ENCODE measurements at regions of chr1 and their contacts with region 1.

Region 1: GRCh38 chr1:3796215-3797061 is at the start of gene LRRC47:
- DNase-seq: peak; percentile 97
- ATAC-seq: peak; percentile 99
- H3K4me3 Mint-ChIP-seq: peak within 1 kb of the TSS; percentile 81
- H3K27ac Mint-ChIP-seq: peak within 1 kb of the TSS; percentile 87
- H3K4me1 Mint-ChIP-seq: peaks cover 44% of the 10 kb centered on the region
- H3K27me3 Mint-ChIP-seq: peaks cover 6% of the 10 kb centered on the region
- total RNA-seq, gene LRRC47: 34.8 to 38.7 TPM

Region 2: GRCh38 chr1:3695326-3696217 is 100.9 kb before region 1 on chr1:
- CTCF ChIA-PET with region 1: no interaction called
- POLR2A ChIA-PET with region 1: no interaction called
- intact Hi-C with region 1: no loop called
- DNase-seq: peak; percentile 65
- ATAC-seq: peak; percentile 76
- H3K4me3 Mint-ChIP-seq: no peak overlapping the region
- H3K27ac Mint-ChIP-seq: no peak overlapping the region
- H3K4me1 Mint-ChIP-seq: peaks cover 3% of the 10 kb centered on the region
- H3K27me3 Mint-ChIP-seq: peaks cover 2% of the 10 kb centered on the region

Region 3: GRCh38 chr1:3707298-3707938 is 89.0 kb before region 1 on chr1:
- CTCF ChIA-PET with region 1: no interaction called
- POLR2A ChIA-PET with region 1: no interaction called
- intact Hi-C with region 1: no loop called
- DNase-seq: no peak
- ATAC-seq: no peak
- H3K4me3 Mint-ChIP-seq: no peak overlapping the region
- H3K27ac Mint-ChIP-seq: no peak overlapping the region
- H3K4me1 Mint-ChIP-seq: peaks cover 5% of the 10 kb centered on the region
- H3K27me3 Mint-ChIP-seq: peaks cover 12% of the 10 kb centered on the region

Region 4: DNA sequence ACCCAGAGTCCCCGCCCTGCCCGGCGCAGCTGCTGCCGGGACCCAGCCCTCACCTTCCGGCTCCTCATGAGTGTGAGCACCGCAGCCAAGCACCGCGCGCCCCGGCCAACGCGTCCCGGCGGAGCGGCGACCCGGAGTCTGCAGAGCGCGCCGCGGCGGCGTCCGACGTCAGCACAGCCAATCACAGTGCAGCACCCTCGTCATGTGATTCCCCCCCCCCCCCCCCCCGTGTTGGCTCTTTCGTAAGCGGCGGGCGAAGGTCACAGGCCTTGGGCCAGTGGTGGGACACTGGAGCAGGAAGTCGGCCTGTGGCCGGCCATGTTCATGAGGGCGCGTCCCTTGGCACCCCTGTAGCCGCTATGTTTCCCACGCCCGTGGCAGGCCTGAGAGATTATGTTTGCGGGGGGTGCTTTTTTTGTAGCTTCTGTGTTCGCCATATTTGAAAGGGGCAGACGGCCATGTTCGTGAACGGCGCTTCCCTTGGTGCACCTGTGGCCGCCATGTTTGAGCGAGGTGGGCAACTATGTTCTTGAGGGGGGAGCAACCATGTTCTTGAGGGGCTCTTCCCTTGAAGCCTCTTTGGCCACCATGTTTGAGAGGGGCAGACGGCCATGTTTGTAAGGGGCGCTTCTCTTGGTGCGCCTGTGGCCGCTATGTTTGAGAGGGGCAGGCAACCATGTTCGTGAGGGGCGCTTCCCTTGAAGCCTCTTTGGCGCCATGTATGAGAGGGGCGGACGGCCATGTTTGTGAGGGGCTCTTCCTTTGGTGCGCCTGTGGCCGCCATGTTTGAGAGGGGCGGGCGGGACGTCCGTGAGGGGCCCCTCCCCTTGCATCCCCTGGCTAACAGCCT is 103.9 kb after region 1 on chr1 and contains the start of gene C1orf174:
- CTCF ChIA-PET with region 1: no interaction called
- POLR2A ChIA-PET with region 1: no interaction called
- intact Hi-C with region 1: loop called (anchors 1 kb)
- DNase-seq: peak; percentile 94
- ATAC-seq: peak; percentile 76
- H3K4me3 Mint-ChIP-seq: peak within 1 kb of the TSS; percentile 87
- H3K27ac Mint-ChIP-seq: peak within 1 kb of the TSS; percentile 98
- H3K4me1 Mint-ChIP-seq: peaks cover 51% of the 10 kb centered on the region
- H3K27me3 Mint-ChIP-seq: no peaks in the 10 kb centered on the region
- total RNA-seq, gene C1orf174: 39.8 to 49.4 TPM

Region 5: GRCh38 chr1:3928586-3928985 is 132.1 kb after region 1 on chr1:
- CTCF ChIA-PET with region 1: no interaction called
- POLR2A ChIA-PET with region 1: no interaction called
- intact Hi-C with region 1: no loop called
- DNase-seq: no peak
- ATAC-seq: no peak
- H3K4me3 Mint-ChIP-seq: no peak overlapping the region
- H3K27ac Mint-ChIP-seq: no peak overlapping the region
- H3K4me1 Mint-ChIP-seq: no peaks in the 10 kb centered on the region
- H3K27me3 Mint-ChIP-seq: peaks cover 8% of the 10 kb centered on the region

Measured in activated CD4-positive, alpha-beta T cell treated with anti-CD3 and anti-CD28 coated beads for 36 hours (primary cell).